Heart left ventricle (tissue), 16 donors: ENCODE measurements at regions of chr1 and their contacts with region 1.

Region 1: GRCh38 chr1:6222636-6223035 is 13.1 kb downstream of the ICMT start:
- DNase-seq: peak in 4 of 5 donors; percentile 82 to 91 (median 86)
- ATAC-seq: peak; percentile 69 to 80 (median 75)
- H3K4me3 ChIP-seq: no peak overlapping the region
- H3K27ac ChIP-seq: peak overlapping the region; percentile 7 to 80 (median 70)
- H3K4me1 ChIP-seq: peaks cover 0 to 49% (median 33%) of the 10 kb centered on the region in 12 donors
- H3K27me3 ChIP-seq: no peaks in the 10 kb centered on the region
- CTCF ChIP-seq: no peak
- POLR2A ChIP-seq: no peak

Region 2: DNA sequence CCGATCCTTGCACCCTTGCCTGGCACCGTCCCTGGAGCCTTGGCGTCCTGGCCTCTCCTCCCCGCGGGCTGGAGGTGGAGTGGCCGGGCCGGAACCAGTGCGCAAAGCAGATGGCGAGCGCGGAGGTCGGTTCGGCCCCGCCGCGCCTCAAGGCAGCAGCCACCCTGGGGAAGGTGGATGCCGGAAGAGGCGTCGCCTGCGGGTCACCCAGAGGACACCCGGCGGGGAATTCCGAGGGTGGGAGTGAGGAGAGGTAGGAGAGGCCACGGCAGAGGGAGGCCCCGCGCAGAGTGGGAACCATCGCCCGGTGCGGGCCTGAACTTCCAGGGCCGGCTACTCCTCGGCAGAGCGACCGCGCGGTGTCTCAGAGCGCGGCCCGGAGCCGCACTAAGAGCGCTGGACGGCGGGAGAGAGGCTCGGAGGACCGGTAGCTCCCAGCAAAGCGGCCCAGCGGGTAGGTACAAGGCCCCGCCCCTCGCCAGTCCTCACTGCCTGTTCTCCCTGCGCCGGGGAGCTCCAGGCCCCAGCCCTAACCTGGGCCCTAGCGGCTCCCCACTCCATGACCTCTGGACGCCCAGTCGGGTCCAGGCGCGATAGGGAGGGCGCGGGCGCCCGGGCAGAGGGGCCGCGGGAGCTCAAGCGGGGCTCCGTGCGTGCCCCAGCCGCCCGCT is 16.7 kb before region 1 on chr1 and contains the start of gene RNF207:
- intact Hi-C with region 1: loop called in 1 of 10 experiments (anchors 2 kb)
- DNase-seq: peak; percentile 77 to 90 (median 80)
- ATAC-seq: peak; percentile 17 to 74 (median 72)
- H3K4me3 ChIP-seq: peak within 1 kb of the TSS; percentile 47 to 80 (median 68)
- H3K27ac ChIP-seq: peak within 1 kb of the TSS; percentile 86 to 99 (median 92)
- H3K4me1 ChIP-seq: peaks cover 0 to 57% (median 44%) of the 10 kb centered on the region in 12 donors
- H3K27me3 ChIP-seq: peaks cover 0 to 34% (median 0%) of the 10 kb centered on the region in 9 donors
- CTCF ChIP-seq: no peak
- POLR2A ChIP-seq: peak; percentile 32 to 52
- total RNA-seq, gene RNF207: 27.0 to 126 (median 58.2) TPM